Heart right ventricle (tissue), 16 donors: ENCODE measurements at regions of chr11 and their contacts with region 1.

Region 1: GRCh38 chr11:57277845-57278709 is 41.0 kb upstream of the APLNR start:
- DNase-seq: peak; percentile 68 to 81
- ATAC-seq: peak; percentile 57 to 80 (median 73)
- H3K4me3 ChIP-seq: peak overlapping the region in 3 of 10 donors; percentile 5 to 24 (median 8)
- H3K27ac ChIP-seq: peak overlapping the region in 9 of 10 donors; percentile 59 to 92 (median 82)
- H3K4me1 ChIP-seq: peaks cover 0 to 40% (median 26%) of the 10 kb centered on the region in 9 donors
- H3K27me3 ChIP-seq: no peaks in the 10 kb centered on the region
- CTCF ChIP-seq: peak; percentile 70 to 87 (median 84)

Region 2: DNA sequence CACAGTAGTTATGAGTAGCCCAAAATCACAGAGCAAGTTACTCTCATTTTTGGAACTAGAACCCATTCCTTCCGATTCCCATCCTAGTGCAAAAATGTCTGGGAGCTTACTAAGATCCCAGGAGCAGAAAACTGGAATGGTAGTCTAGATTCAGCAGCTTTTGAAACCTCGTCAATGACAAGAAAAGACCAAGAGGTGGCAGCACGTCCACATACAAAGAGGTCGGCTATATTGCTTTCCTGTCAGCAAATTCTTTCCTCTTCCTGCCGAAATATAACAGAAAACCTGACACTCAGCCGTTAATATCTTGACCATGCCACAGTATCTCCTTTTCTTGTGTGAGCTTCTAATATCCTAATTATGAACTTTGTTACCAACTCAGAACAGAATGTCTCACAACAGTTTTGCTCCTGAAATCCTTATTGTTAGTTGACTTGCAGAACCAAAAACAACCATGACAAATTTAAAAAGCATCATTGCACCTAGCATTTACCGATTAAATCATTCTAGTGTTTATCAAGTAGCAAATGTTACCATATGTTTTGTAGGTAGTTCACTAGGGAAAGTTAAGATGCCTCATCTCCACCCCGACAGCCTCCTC is 436.8 kb before region 1 on chr11:
- intact Hi-C with region 1: loop called in 1 of 10 experiments (anchors 10 kb)
- DNase-seq: peak in 1 of 2 donors; percentile 40
- ATAC-seq: peak in 3 of 8 donors; percentile 35 to 75 (median 53)
- H3K4me3 ChIP-seq: no peak overlapping the region
- H3K27ac ChIP-seq: no peak overlapping the region
- H3K4me1 ChIP-seq: peaks cover 0 to 4% (median 0%) of the 10 kb centered on the region in 9 donors
- H3K27me3 ChIP-seq: peaks cover 0 to 9% (median 0%) of the 10 kb centered on the region in 7 donors
- CTCF ChIP-seq: peak; percentile 45 to 81 (median 70)

Region 3: DNA sequence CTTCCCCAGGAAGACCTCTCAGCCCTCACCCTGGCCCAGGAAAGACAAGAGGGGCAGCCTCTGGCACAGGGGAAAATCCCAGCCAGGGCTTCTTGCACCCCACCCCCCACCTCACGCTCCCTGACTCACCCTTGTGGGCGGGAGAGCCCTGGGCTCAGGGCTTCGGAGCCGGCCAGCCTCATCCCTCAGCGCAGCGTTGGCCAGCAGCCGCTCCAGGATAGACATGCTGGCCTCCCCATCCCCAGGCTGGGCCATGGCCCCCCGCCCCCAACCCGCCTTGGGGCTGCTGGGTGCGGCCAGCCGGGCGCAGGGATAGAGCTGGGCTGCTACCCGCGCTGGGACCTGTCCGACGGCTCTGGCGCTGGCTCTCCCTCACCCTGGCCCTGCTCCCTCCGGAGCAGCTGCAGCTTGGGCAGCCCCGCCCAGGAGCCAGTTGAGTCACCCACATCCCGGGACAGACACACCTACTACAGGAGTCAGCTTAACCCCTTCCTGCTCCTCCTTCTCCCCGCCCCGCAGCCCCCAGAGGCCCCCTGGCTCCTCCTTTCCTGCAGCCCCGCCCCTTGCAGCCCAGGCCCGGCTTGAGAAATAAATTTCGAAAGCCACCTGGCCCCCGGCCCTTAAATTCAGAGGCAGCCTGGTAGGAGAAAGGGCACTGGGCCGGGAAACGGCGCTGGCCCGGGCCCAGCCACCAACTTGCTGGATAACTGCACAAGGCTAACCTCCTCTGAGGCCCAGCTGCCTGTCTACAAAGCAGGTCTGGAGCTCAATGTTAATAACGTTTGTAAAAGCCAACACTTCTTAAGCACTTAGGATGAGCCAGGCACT is 33.2 kb after region 1 on chr11:
- intact Hi-C with region 1: loop called in 1 of 10 experiments (anchors 1 kb)
- DNase-seq: peak; percentile 90
- ATAC-seq: peak; percentile 89 to 97 (median 94)
- H3K4me3 ChIP-seq: peak overlapping the region; percentile 41 to 68 (median 56)
- H3K27ac ChIP-seq: peak overlapping the region; percentile 69 to 91 (median 82)
- H3K4me1 ChIP-seq: peaks cover 21 to 99% (median 78%) of the 10 kb centered on the region in 9 donors
- H3K27me3 ChIP-seq: no peaks in the 10 kb centered on the region
- CTCF ChIP-seq: no peak

Region 4: GRCh38 chr11:57324886-57325734 is 47.0 kb after region 1 on chr11 and contains the start of gene TNKS1BP1:
- intact Hi-C with region 1: loop called in 1 of 10 experiments (anchors 5 kb)
- DNase-seq: peak; percentile 96 to 98
- ATAC-seq: peak; percentile 85 to 92 (median 88)
- H3K4me3 ChIP-seq: peak within 1 kb of the TSS; percentile 65 to 80 (median 71)
- H3K27ac ChIP-seq: peak within 1 kb of the TSS; percentile 86 to 96 (median 92)
- H3K4me1 ChIP-seq: peaks cover 8 to 62% (median 49%) of the 10 kb centered on the region in 9 donors
- H3K27me3 ChIP-seq: no peaks in the 10 kb centered on the region
- CTCF ChIP-seq: no peak
- total RNA-seq, gene TNKS1BP1: 19.9 to 53.8 (median 34.3) TPM

Region 5: GRCh38 chr11:57345555-57346211 is 67.6 kb after region 1 on chr11:
- intact Hi-C with region 1: no loop called
- DNase-seq: peak; percentile 42 to 74
- ATAC-seq: peak in 7 of 8 donors; percentile 49 to 75 (median 73)
- H3K4me3 ChIP-seq: no peak overlapping the region
- H3K27ac ChIP-seq: no peak overlapping the region
- H3K4me1 ChIP-seq: peaks cover 0 to 9% (median 4%) of the 10 kb centered on the region in 9 donors
- H3K27me3 ChIP-seq: peaks cover 0 to 7% (median 0%) of the 10 kb centered on the region in 7 donors
- CTCF ChIP-seq: peak; percentile 67 to 90 (median 87)